Mammary epithelial cell (primary cell): ENCODE measurements at regions of chr22 and their contacts with region 1.

Region 1: GRCh38 chr22:17754233-17754925 is 19.9 kb downstream of the BID start:
- DNase-seq: no peak
- H3K4me3 ChIP-seq: no peak overlapping the region
- H3K27ac ChIP-seq: no peak overlapping the region
- H3K4me1 ChIP-seq: no peaks in the 10 kb centered on the region
- H3K27me3 ChIP-seq: no peaks in the 10 kb centered on the region
- CTCF ChIP-seq: peak in 1 of 2 donors; percentile 31

Region 2: DNA sequence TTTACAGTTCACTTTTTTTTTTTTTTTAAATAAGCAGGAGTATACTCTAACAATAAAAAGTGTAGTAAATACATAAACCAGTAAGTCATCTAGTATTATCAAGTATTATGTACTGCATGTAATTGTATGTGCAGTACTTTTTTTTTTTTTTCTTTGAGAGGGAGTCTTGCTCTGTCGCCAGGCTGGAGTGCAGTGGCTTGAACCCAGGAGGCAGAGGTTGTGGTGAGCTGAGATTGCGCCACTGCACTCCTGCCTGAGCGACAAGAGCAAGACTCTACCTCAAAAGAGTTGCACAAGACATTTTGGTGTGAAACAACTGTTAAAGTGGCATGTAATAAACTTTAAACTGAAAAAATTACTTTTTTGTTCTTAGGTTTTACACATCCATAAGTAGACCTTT is 99.1 kb before region 1 on chr22:
- CTCF ChIA-PET with region 1: no interaction called
- dilution Hi-C with region 1: no loop called
- in situ Hi-C with region 1: no loop called
- intact Hi-C with region 1: no loop called
- DNase-seq: no peak
- H3K4me3 ChIP-seq: no peak overlapping the region
- H3K27ac ChIP-seq: no peak overlapping the region
- H3K4me1 ChIP-seq: no peaks in the 10 kb centered on the region
- H3K27me3 ChIP-seq: no peaks in the 10 kb centered on the region
- CTCF ChIP-seq: no peak

Region 3: DNA sequence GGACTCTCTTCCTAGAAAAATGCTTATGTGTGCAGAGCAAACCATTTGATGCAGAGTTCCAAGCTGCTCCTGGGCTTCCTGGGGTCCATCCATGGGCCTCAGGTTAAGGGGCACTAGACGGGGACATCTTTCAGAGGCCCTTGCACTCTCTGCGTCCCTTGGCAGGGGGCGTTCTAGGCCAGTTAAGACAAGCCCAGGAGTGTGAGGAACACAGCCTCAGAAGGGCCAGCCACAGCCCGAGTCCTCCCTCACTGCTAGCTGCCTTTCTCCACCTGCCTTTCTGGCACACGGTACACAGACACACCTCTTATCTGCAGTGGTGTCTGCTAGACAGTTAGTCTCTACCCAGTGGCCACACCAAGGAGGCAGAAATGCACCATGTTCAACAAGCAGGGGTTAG is 37.9 kb after region 1 on chr22:
- CTCF ChIA-PET with region 1: no interaction called
- dilution Hi-C with region 1: loop called (anchors 5 kb)
- in situ Hi-C with region 1: no loop called
- intact Hi-C with region 1: no loop called
- DNase-seq: no peak
- H3K4me3 ChIP-seq: no peak overlapping the region
- H3K27ac ChIP-seq: no peak overlapping the region
- H3K4me1 ChIP-seq: peaks cover 5% of the 10 kb centered on the region
- H3K27me3 ChIP-seq: no peaks in the 10 kb centered on the region
- CTCF ChIP-seq: no peak